Natural killer cell (primary cell): ENCODE measurements at regions of chr19 and their contacts with region 1.

Region 1: GRCh38 chr19:6481541-6482342 is at the start of gene DENND1C:
- DNase-seq: peak; percentile 69 to 80
- ATAC-seq: peak; percentile 86 to 94 (median 89)
- H3K4me3 ChIP-seq: peak within 1 kb of the TSS; percentile 71
- H3K4me3 Mint-ChIP-seq: peak within 1 kb of the TSS; percentile 94
- H3K27ac ChIP-seq: peak within 1 kb of the TSS; percentile 90
- H3K27ac Mint-ChIP-seq: peak within 1 kb of the TSS; percentile 95 to 99
- H3K4me1 ChIP-seq: peaks cover 46% of the 10 kb centered on the region
- H3K4me1 Mint-ChIP-seq: peaks cover 41 to 46% of the 10 kb centered on the region in 2 donors
- H3K27me3 ChIP-seq: no peaks in the 10 kb centered on the region
- H3K27me3 Mint-ChIP-seq: no peaks in the 10 kb centered on the region
- CTCF ChIP-seq: peak; percentile 46
- total RNA-seq, gene DENND1C: 175 to 197 (median 188) TPM

Region 2: DNA sequence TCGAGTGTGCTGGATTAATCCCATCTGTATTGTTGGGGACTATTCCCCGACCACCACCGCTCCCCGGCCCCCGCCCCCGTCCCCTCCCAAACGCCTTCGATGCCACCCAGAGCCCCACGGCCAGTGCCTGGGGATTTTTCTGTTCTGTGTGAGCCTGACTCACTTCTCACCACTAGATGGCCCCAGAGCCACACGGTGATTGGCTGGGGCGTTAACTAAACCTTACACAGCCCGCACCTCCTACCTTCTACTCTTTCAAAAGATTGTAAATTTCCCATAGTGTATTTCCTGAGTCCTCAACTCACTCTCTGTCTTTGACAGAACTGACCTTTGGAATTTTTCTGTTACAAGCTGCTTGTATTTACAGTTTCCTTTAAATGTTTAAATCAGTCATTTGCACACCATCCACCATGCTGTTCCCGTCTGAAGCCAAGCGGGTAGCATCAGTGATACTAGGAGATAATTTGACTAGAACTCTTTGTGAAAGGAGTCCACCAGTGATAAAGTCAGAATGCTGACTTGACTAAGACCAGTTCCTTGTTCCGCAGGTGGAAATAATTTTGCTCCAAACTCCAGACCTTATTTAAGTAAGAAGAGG is 432.8 kb before region 1 on chr19:
- intact Hi-C with region 1: no loop called
- DNase-seq: peak; percentile 65 to 91
- ATAC-seq: peak; percentile 95 to 100 (median 100)
- H3K4me3 ChIP-seq: no peak overlapping the region
- H3K4me3 Mint-ChIP-seq: no peak overlapping the region
- H3K27ac ChIP-seq: no peak overlapping the region
- H3K27ac Mint-ChIP-seq: no peak overlapping the region
- H3K4me1 ChIP-seq: no peaks in the 10 kb centered on the region
- H3K4me1 Mint-ChIP-seq: peaks cover 5 to 7% of the 10 kb centered on the region in 2 donors
- H3K27me3 ChIP-seq: no peaks in the 10 kb centered on the region
- H3K27me3 Mint-ChIP-seq: peaks cover 9 to 10% of the 10 kb centered on the region in 2 donors
- CTCF ChIP-seq: peak; percentile 81

Region 3: GRCh38 chr19:6450166-6450565 is 31.6 kb before region 1 on chr19:
- intact Hi-C with region 1: no loop called
- DNase-seq: no peak
- ATAC-seq: no peak
- H3K4me3 ChIP-seq: no peak overlapping the region
- H3K4me3 Mint-ChIP-seq: no peak overlapping the region
- H3K27ac ChIP-seq: no peak overlapping the region
- H3K27ac Mint-ChIP-seq: no peak overlapping the region
- H3K4me1 ChIP-seq: no peaks in the 10 kb centered on the region
- H3K4me1 Mint-ChIP-seq: no peaks in the 10 kb centered on the region
- H3K27me3 ChIP-seq: no peaks in the 10 kb centered on the region
- H3K27me3 Mint-ChIP-seq: peaks cover 0 to 2% of the 10 kb centered on the region in 2 donors
- CTCF ChIP-seq: no peak

Region 4: GRCh38 chr19:6460101-6460853 is 21.5 kb before region 1 on chr19:
- intact Hi-C with region 1: loop called (anchors 2 kb)
- DNase-seq: peak; percentile 92 to 97
- ATAC-seq: peak; percentile 83 to 91 (median 87)
- H3K4me3 ChIP-seq: peak overlapping the region; percentile 71
- H3K4me3 Mint-ChIP-seq: peak overlapping the region; percentile 99
- H3K27ac ChIP-seq: peak overlapping the region; percentile 81
- H3K27ac Mint-ChIP-seq: peak overlapping the region; percentile 91 to 95
- H3K4me1 ChIP-seq: peaks cover 30% of the 10 kb centered on the region
- H3K4me1 Mint-ChIP-seq: peaks cover 18 to 27% of the 10 kb centered on the region in 2 donors
- H3K27me3 ChIP-seq: peaks cover 6% of the 10 kb centered on the region
- H3K27me3 Mint-ChIP-seq: peaks cover 0 to 6% of the 10 kb centered on the region in 2 donors
- CTCF ChIP-seq: peak; percentile 72

Region 5: DNA sequence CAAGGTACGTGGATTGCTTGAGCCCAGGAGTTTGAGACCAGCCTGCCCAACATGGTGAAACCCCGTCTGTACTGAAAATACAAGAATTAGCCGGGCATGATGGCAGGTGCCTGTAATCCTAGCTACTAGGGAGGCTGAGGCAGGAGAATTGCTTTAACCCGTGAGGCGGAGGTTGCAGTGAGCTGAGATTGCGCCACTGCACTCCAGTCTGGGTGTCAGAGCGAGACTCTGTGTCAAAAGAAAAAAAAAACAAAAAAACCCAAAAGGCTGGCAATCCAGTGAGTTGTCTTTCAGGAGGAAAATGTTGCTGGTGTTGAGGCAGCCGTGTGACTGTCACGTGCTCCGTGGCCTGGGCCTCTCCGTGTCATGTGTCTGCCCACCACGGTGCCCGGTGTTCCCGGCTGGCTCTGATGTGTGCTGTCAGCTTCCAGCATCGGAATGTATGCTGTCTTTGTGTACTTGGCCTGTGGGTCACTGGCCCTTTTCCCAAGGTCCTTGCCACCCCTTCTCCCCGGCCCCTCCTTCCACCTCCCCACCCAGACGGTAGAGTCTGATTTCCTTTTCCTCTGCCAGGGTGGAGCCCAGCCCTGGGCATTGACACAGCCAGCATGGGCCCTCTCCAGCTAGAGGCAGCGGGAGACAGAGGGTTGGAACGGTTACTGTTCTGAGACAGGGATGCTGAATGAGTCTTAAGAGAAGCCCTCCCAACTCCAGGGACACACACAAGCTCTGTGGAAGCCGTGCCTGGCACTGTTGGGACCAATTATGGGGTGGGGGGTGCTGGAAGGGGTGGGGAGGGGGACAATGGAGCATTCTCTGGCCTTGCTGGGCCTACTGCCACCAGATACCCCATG is 27.6 kb after region 1 on chr19:
- intact Hi-C with region 1: no loop called
- DNase-seq: no peak
- ATAC-seq: no peak
- H3K4me3 ChIP-seq: no peak overlapping the region
- H3K4me3 Mint-ChIP-seq: no peak overlapping the region
- H3K27ac ChIP-seq: no peak overlapping the region
- H3K27ac Mint-ChIP-seq: no peak overlapping the region
- H3K4me1 ChIP-seq: peaks cover 5% of the 10 kb centered on the region
- H3K4me1 Mint-ChIP-seq: peaks cover 0 to 5% of the 10 kb centered on the region in 2 donors
- H3K27me3 ChIP-seq: no peaks in the 10 kb centered on the region
- H3K27me3 Mint-ChIP-seq: no peaks in the 10 kb centered on the region
- CTCF ChIP-seq: no peak